ENCODE measurements at regions of chr2 and their contacts with region 1.

Region 1: DNA sequence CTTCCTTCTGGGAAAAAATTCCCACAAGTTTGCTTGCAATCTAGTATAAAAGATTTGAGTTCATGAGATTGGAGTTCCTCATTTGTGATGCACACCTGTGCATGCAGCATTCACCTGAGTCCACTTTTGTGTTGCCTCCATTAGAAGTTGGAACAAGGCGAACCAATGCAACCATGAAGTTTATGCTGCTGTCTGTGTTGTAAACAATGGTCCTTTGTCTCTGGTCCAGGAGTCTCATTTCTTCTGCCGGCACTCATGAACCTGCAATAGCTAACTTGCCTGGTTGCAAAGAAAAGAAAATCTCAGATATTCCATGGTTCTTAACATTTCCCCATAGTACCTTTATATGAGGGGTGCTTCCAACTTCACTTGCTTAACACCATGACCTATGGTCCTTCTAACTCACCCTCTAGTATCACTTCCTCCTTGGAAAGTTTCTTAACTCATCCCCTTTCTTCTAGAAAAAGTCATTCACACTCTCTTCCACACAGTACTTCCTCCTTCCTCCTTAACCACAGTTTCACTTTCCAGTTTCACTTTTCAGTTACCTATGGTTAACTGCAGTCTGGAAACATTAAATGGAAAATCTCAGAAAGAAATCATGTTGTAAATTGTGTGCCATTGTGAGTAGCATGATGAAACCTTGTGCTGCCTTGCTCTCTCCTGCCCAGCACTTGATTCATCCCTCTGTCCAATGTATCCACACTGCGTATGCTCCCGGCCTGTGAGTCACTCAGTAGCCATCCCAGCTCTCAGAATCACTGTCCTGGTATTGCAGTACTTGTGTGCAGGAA is 128.8 kb upstream of the TRIB2 start:
- DNase-seq: peak; percentile 86
- ATAC-seq: peak; percentile 94
- H3K4me3 ChIP-seq: peak overlapping the region in 1 of 5 experiments; percentile 34
- H3K4me3 Mint-ChIP-seq: peak overlapping the region; percentile 46
- H3K27ac ChIP-seq: no peak overlapping the region
- H3K27ac Mint-ChIP-seq: peak overlapping the region; percentile 75
- H3K4me1 ChIP-seq: peaks cover 39 to 41% of the 10 kb centered on the region in 2 donors
- H3K4me1 Mint-ChIP-seq: peaks cover 46% of the 10 kb centered on the region
- H3K27me3 ChIP-seq: no peaks in the 10 kb centered on the region
- H3K27me3 Mint-ChIP-seq: no peaks in the 10 kb centered on the region
- CTCF ChIP-seq: no peak

Region 2: DNA sequence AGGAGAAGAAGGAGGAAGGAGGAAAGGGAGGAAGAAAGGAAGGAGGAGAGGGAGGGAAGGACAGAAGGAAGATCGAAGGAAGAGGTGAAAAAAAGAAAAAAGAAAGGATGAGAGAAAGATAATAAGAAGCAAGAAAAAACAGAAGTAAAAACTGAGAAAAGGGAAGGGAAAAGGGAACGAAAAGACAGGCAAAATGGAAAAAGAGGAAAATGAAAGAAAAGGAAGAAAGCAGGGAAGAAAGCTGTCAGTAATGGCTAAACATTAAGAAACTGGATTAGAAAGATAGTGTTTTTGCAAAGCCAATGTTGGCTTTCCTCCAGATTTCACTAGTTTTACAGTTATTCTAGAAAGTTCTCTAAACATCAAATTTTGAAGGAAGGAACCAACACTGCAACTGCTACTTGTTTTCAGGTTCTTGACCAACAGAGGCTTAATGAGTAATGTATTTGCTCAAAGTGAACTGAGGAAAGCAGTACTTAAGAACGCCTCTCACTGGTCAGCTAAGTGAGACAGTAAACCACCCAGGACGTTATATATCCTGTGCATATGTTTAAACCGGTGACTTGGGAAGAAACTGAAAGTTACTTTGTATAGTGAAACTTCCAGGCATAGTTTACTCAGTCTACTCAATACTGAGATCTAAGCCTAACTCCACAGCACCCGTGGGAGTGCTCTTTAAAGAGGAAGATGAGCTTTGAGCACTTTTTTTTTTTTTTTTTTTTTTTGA is 157.4 kb before region 1 on chr2:
- CTCF ChIA-PET with region 1: no interaction called
- POLR2A ChIA-PET with region 1: no interaction called
- intact Hi-C with region 1: no loop called
- DNase-seq: peak; percentile 48
- ATAC-seq: peak; percentile 24
- H3K4me3 ChIP-seq: peak overlapping the region in 3 of 5 experiments; percentile 13 to 31 (median 14)
- H3K4me3 Mint-ChIP-seq: peak overlapping the region; percentile 61
- H3K27ac ChIP-seq: peak overlapping the region in 1 of 2 donors; percentile 42
- H3K27ac Mint-ChIP-seq: peak overlapping the region; percentile 42
- H3K4me1 ChIP-seq: peaks cover 11% of the 10 kb centered on the region in 2 donors
- H3K4me1 Mint-ChIP-seq: peaks cover 14% of the 10 kb centered on the region
- H3K27me3 ChIP-seq: no peaks in the 10 kb centered on the region
- H3K27me3 Mint-ChIP-seq: no peaks in the 10 kb centered on the region
- CTCF ChIP-seq: no peak

Region 3: GRCh38 chr2:12555012-12555645 is 32.8 kb before region 1 on chr2:
- CTCF ChIA-PET with region 1: no interaction called
- POLR2A ChIA-PET with region 1: interaction called, 3 read pairs
- intact Hi-C with region 1: loop called (anchors 5 kb)
- DNase-seq: no peak
- ATAC-seq: peak; percentile 60
- H3K4me3 ChIP-seq: no peak overlapping the region
- H3K4me3 Mint-ChIP-seq: peak overlapping the region; percentile 60
- H3K27ac ChIP-seq: no peak overlapping the region
- H3K27ac Mint-ChIP-seq: peak overlapping the region; percentile 69
- H3K4me1 ChIP-seq: peaks cover 23 to 32% of the 10 kb centered on the region in 2 donors
- H3K4me1 Mint-ChIP-seq: peaks cover 45% of the 10 kb centered on the region
- H3K27me3 ChIP-seq: no peaks in the 10 kb centered on the region
- H3K27me3 Mint-ChIP-seq: no peaks in the 10 kb centered on the region
- CTCF ChIP-seq: no peak

Region 4: GRCh38 chr2:12602661-12603060 is 14.7 kb after region 1 on chr2:
- CTCF ChIA-PET with region 1: no interaction called
- POLR2A ChIA-PET with region 1: no interaction called
- intact Hi-C with region 1: no loop called
- DNase-seq: no peak
- ATAC-seq: no peak
- H3K4me3 ChIP-seq: no peak overlapping the region
- H3K4me3 Mint-ChIP-seq: no peak overlapping the region
- H3K27ac ChIP-seq: no peak overlapping the region
- H3K27ac Mint-ChIP-seq: no peak overlapping the region
- H3K4me1 ChIP-seq: no peaks in the 10 kb centered on the region
- H3K4me1 Mint-ChIP-seq: peaks cover 3% of the 10 kb centered on the region
- H3K27me3 ChIP-seq: peaks cover 0 to 10% (median 2%) of the 10 kb centered on the region in 4 experiments
- H3K27me3 Mint-ChIP-seq: peaks cover 20% of the 10 kb centered on the region
- CTCF ChIP-seq: no peak

Region 5: GRCh38 chr2:12619975-12620374 is 32.0 kb after region 1 on chr2:
- CTCF ChIA-PET with region 1: interaction called, 3 read pairs
- POLR2A ChIA-PET with region 1: no interaction called
- intact Hi-C with region 1: loop called (anchors 1 kb)
- DNase-seq: no peak
- ATAC-seq: no peak
- H3K4me3 ChIP-seq: no peak overlapping the region
- H3K4me3 Mint-ChIP-seq: no peak overlapping the region
- H3K27ac ChIP-seq: no peak overlapping the region
- H3K27ac Mint-ChIP-seq: no peak overlapping the region
- H3K4me1 ChIP-seq: peaks cover 19 to 22% of the 10 kb centered on the region in 2 donors
- H3K4me1 Mint-ChIP-seq: peaks cover 24% of the 10 kb centered on the region
- H3K27me3 ChIP-seq: peaks cover 0 to 11% (median 6%) of the 10 kb centered on the region in 4 experiments
- H3K27me3 Mint-ChIP-seq: peaks cover 5% of the 10 kb centered on the region
- CTCF ChIP-seq: no peak

Measured in B cell (primary cell).